Vagina (tissue), 2 donors: ENCODE measurements at regions of chr12 and their contacts with region 1.

Region 1: DNA sequence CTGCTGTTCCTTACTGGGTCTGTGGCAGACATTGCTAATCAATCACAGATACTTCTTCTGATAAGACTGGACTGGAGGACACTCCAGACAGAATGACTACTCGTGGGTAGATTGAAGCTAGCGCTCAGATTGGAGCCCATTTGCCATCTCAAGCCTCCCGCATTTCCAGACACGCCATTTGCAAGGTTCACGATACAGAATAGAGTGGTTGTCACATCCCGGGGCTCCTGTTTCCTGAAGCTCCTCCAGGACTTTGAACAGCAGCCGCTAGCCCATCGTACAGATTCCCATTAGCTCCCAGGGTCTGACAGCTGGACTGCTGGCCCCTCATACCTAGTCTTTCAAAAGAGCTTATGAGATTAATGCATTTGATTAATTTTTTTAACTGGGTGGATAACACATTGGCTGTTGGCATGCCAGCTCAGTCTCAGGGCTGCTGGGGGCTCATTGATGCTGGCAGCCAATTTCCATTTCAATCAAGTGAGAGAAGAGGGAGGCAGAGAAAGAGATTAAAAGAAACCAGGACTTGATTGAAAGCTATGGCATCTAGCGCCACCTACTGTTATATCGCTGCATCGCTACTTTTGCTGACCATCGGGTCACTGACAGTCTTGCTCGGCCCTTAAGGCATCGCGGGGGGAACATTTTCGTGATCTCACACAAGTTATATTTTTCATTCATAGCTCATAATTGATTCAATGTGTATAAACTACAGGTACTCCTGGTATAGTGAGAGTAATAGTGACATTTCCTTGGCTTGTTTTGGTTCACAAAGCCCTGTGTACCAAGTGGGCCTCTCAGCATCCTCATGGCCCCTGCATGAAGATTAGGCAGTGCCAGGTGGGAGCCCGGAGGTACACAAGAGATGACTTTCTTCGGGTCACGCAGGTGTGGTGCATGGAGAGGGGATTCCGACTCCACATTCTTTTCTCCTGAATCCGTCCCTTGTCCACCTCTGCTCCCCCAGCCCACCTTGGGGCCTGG is 78.6 kb downstream of the CCDC60 start:
- DNase-seq: no peak
- H3K4me3 ChIP-seq: no peak overlapping the region
- H3K27ac ChIP-seq: no peak overlapping the region
- H3K4me1 ChIP-seq: no peaks in the 10 kb centered on the region
- H3K27me3 ChIP-seq: no peaks in the 10 kb centered on the region
- CTCF ChIP-seq: peak; percentile 44 to 75 (median 65)
- POLR2A ChIP-seq: no peak

Region 2: DNA sequence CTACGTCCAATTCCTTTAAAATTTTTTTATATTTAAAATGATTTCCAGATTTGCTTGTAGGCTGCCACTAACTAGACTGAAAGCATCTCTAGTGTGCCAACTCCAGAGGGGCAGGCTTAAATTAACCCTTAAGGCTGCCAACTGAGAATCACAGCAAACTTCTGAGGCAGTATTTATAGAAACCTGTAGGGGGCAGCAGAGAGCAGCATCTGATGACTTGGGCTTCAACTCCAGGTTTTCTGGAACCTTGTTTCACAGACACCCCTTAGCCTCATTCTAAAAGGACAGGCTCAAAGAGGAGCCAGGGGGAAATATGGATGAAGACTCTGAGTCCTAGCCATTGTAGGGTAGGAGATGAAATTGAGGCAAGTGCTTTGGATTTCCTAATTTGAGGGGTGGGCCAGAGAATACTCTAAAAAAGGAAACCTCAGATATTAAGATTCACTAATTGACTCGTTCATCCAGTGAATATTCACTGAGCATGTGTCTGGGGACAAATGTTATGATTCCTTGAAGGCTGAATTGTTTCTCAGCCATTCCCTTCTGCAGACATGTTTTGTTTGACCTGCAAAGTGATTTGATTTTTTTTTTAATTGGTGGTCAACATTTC is 297.7 kb before region 1 on chr12:
- intact Hi-C with region 1: loop called (anchors 5 kb)
- DNase-seq: no peak
- H3K4me3 ChIP-seq: no peak overlapping the region
- H3K27ac ChIP-seq: no peak overlapping the region
- H3K4me1 ChIP-seq: no peaks in the 10 kb centered on the region
- H3K27me3 ChIP-seq: no peaks in the 10 kb centered on the region
- CTCF ChIP-seq: peak; percentile 81 to 94 (median 89)
- POLR2A ChIP-seq: no peak